ENCODE measurements at regions of chr4 and their contacts with region 1.

Region 1: GRCh38 chr4:76607266-76607799 is 172.3 kb downstream of the SHROOM3 start:
- DNase-seq: no peak

Region 2: GRCh38 chr4:76515975-76516843 is 91.1 kb before region 1 on chr4:
- intact Hi-C with region 1: loop called in 1 of 2 experiments (anchors 5 kb)
- DNase-seq: no peak

Region 3: DNA sequence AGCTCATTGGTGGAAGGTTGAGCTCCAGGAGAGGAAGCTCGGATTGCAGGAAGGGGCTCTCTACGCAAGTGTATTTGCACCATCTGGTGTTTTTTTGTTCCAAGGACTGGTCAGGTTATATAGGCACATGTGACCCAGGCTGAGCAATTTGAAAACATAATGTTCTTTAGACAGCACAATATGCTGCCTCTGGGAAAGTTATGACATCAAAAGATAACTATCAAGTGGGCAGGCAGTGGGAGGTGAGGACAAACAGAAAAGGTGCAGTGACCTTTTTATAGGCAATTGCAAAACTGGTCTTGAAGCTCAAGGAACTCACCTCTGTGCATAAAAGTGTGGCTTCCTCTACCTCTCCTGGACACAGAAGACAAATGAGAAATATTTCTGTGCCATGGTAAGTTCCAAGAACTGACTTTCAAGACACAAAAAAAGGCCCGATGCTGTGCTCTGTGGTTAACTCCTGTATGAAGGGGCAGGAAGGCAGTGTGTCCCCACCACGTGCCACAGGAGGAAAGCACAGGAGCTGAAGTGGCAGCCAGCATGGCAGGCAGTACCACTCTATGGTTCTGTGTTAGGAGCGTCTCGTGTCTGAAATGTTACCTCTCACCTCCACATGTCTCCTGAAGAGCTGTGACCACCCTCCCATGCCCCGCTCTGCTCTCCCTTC is 43.7 kb before region 1 on chr4:
- intact Hi-C with region 1: loop called in 1 of 2 experiments (anchors 1 kb)
- DNase-seq: no peak

Region 4: GRCh38 chr4:76977736-76978350 is 370.5 kb after region 1 on chr4:
- intact Hi-C with region 1: no loop called
- DNase-seq: no peak